Thyroid gland (tissue), 4 donors: ENCODE measurements at regions of chr19 and their contacts with region 1.

Region 1: DNA sequence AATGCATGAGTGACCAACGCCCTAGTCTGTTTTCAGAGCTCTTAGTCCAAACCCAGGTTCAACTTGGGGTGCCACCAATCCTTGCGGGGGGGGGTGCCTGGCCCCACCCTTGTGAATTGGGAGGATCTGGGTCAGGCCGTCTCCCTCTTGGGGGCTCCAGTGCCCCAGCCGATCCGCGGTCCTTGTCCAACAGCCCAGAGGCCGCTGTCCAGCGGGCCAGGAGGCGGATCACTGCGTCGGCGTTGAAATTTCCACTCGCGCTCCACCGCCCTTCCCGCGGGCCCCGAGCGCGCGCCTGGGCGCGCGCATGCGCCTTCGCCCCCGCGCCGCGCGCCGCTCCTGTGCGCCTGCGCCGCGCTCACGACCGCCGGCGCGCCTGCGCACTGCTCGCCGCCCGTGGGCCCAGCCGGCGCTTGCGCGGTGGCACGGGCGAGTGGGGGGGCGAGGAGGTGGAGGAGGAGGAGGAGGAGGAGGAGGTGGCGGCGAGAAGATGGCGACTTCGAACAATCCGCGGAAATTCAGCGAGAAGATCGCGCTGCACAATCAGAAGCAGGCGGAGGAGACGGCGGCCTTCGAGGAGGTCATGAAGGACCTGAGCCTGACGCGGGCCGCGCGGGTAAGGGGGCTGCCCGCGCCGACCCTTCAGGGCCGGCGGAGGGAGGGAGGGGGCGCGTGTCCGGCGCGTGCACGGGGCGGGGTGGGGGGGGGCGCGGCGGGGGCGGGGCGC is at the start of gene CRTC1:
- DNase-seq: peak; percentile 86 to 89
- H3K4me3 ChIP-seq: peak within 1 kb of the TSS; percentile 1 to 51 (median 30)
- H3K27ac ChIP-seq: peak within 1 kb of the TSS; percentile 76 to 86 (median 81)
- H3K4me1 ChIP-seq: peaks cover 11 to 19% of the 10 kb centered on the region in 2 donors
- H3K27me3 ChIP-seq: no peaks in the 10 kb centered on the region
- CTCF ChIP-seq: peak in 1 of 6 experiments; percentile 8
- POLR2A ChIP-seq: peak in 1 of 2 donors; percentile 75
- total RNA-seq, gene CRTC1: 12.3 to 15.9 (median 13.1) TPM

Region 2: DNA sequence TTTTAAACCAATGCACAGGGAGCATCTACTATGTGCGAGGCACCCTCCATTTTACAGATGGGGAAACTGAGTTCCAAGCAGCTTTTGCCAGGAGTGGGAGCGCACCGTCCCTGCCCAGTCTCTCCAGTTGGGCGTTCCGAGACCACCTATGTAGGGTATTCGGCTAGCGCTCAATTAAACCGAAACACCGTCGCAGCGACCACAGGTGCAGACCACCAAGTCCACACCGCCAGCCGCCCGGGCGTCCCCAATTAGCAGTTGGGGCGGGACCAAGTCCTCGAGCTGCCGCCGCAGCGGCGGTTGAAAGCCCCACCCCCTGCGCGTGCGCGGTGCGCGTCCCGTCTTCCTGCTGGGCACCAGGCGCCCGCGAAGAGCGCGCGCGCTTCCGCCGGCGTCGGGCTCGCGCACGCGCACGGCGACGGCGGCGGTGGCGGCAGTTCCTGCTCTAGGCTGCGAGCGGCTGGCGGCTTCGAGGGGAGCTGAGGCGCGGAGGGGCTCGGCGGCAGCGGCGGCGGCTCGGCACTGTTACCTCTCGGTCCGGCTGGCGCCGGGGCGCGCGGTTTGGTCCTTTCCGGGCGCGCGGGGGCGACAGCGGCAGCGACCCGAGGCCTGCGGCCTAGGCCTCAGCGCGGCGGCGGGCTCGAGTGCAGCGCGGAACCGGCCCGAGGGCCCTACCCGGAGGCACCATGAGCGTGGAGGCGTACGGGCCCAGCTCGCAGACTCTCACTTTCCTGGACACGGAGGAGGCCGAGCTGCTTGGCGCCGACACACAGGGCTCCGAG is 148.3 kb after region 1 on chr19 and contains the start of gene UPF1:
- intact Hi-C with region 1: loop called (anchors 5 kb)
- DNase-seq: peak; percentile 90 to 92
- H3K4me3 ChIP-seq: peak within 1 kb of the TSS; percentile 32 to 94 (median 59)
- H3K27ac ChIP-seq: peak within 1 kb of the TSS; percentile 50 to 88 (median 85)
- H3K4me1 ChIP-seq: peaks cover 22 to 27% of the 10 kb centered on the region in 2 donors
- H3K27me3 ChIP-seq: no peaks in the 10 kb centered on the region
- CTCF ChIP-seq: peak in 1 of 6 experiments; percentile 9
- POLR2A ChIP-seq: peak; percentile 70 to 85
- total RNA-seq, gene UPF1: 56.7 to 122 (median 79.6) TPM